ENCODE measurements at regions of chr5 and their contacts with region 1.

Region 1: DNA sequence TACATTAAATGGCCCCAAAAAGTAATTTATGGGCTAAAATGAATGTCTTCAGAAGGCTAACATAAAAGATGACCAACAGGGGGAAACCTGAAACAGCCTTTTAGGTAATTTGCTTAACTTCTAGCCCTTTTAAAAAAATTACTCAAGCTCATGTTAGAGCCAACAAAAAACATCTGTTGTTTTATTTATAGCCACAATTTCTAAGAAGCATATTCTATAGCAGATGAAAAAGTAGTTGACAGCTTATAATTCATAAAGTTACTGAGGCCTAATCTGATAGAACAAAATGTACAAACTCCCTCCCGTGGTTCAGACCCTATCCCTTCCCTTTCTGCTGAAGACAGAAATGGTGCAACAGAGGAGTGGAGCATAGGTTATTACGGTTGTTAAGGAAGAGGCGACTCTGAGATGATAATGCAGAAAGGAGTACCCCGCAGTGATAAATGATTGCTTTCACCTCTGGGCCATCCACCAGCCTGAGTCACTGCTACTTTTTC is 46.1 kb downstream of the PIK3R1 start:
- DNase-seq: no peak

Region 2: GRCh38 chr5:67537439-67538148 is 724.0 kb before region 1 on chr5:
- intact Hi-C with region 1: loop called in 1 of 2 experiments (anchors 5 kb)
- DNase-seq: no peak

Region 3: GRCh38 chr5:68272289-68272688 is 10.7 kb after region 1 on chr5:
- intact Hi-C with region 1: no loop called
- DNase-seq: no peak